ENCODE measurements at regions of chr1 and their contacts with region 1.

Region 1: DNA sequence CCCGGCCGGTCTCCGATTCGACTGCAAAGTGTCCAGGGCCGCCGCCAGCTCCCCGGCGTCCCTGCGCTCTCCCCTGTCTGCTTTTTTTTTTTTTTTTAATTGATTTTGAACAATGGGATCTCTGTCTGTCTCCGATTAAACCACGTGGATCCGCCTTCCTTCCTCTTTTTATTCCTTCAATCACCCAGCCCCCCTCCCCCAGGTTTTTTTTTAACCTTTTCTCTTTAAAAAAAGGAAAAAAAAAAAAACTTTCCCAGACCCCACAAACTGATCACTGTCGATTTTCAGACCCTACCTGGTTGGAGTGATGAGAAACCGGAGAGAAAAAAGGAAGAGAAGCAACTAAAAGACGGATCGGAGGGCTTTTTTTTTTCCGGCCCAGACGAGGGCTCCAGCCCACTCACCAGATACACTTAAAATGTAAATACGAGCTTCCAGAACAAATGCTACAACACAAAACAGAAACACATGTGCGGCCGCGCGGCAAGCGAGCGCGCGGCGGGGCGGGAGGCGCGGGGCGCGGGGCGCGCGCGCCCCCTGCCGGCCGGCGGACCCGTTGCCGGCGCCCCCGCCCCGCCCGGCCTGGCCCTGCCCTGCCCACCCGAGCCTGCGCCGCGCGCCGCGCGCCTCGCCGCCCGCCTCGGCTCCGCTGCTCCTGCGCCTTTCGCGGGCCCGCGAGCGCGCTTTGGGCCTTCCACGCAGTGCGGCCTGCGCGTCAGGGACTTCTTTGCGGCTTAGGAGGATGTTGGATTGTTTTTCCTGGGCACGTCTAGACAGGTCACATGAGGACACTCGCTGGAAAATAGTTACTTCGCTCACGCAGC is at the start of gene RCC2:
- DNase-seq: peak; percentile 89
- H3K4me3 ChIP-seq: peak within 1 kb of the TSS; percentile 99
- H3K27ac ChIP-seq: peak within 1 kb of the TSS; percentile 95
- H3K4me1 ChIP-seq: peaks cover 41% of the 10 kb centered on the region
- CTCF ChIP-seq: no peak; the same call in 1 of the 2 replicates
- total RNA-seq, gene RCC2: 125 and 139 TPM in 2 replicates

Region 2: GRCh38 chr1:17452686-17453085 is 13.2 kb after region 1 on chr1:
- CTCF ChIA-PET with region 1: no interaction called
- POLR2A ChIA-PET with region 1: interaction called, 10 read pairs
- intact Hi-C with region 1: no loop called
- DNase-seq: peak; percentile 11
- H3K4me3 ChIP-seq: no peak overlapping the region
- H3K27ac ChIP-seq: no peak overlapping the region
- H3K4me1 ChIP-seq: peaks cover 7% of the 10 kb centered on the region
- CTCF ChIP-seq: no peak

Region 3: GRCh38 chr1:17540255-17541001 is 101.0 kb after region 1 on chr1:
- CTCF ChIA-PET with region 1: no interaction called
- POLR2A ChIA-PET with region 1: no interaction called
- intact Hi-C with region 1: loop called (anchors 5 kb)
- DNase-seq: no peak
- H3K4me3 ChIP-seq: no peak overlapping the region
- H3K27ac ChIP-seq: no peak overlapping the region
- H3K4me1 ChIP-seq: peaks cover 26% of the 10 kb centered on the region
- CTCF ChIP-seq: no peak